Heart right ventricle (tissue), 16 donors: ENCODE measurements at regions of chr2 and their contacts with region 1.

Region 1: GRCh38 chr2:154518872-154519271 is 179.6 kb upstream of the KCNJ3 start:
- DNase-seq: no peak
- ATAC-seq: no peak
- H3K4me3 ChIP-seq: no peak overlapping the region
- H3K27ac ChIP-seq: no peak overlapping the region
- H3K4me1 ChIP-seq: no peaks in the 10 kb centered on the region
- H3K27me3 ChIP-seq: no peaks in the 10 kb centered on the region
- CTCF ChIP-seq: no peak

Region 2: GRCh38 chr2:153043385-153043784 is 1475.5 kb before region 1 on chr2:
- intact Hi-C with region 1: no loop called
- DNase-seq: no peak
- ATAC-seq: no peak
- H3K4me3 ChIP-seq: no peak overlapping the region
- H3K27ac ChIP-seq: no peak overlapping the region
- H3K4me1 ChIP-seq: no peaks in the 10 kb centered on the region
- H3K27me3 ChIP-seq: no peaks in the 10 kb centered on the region
- CTCF ChIP-seq: no peak

Region 3: DNA sequence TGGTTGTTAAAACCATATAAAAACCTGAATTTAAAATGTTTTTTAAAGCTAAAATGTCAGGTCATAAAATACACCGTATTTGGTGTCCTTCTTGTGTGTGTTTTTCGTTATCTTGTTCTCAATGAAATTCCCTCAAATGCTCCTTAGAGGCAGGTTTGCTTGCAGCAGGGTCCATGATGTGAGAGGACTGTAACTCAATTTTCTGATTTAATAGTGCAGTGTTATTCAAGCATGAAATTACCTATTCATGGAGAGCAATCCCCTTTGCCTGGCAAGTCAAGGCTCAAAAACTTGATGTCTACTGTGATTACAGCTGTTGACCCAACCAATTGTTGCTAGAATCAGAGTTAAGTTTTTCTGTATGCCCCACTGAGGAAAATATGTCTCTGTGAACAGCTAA is 328.9 kb before region 1 on chr2:
- intact Hi-C with region 1: loop called in 1 of 10 experiments (anchors 10 kb)
- DNase-seq: no peak
- ATAC-seq: no peak
- H3K4me3 ChIP-seq: no peak overlapping the region
- H3K27ac ChIP-seq: no peak overlapping the region
- H3K4me1 ChIP-seq: no peaks in the 10 kb centered on the region
- H3K27me3 ChIP-seq: no peaks in the 10 kb centered on the region
- CTCF ChIP-seq: no peak

Region 4: DNA sequence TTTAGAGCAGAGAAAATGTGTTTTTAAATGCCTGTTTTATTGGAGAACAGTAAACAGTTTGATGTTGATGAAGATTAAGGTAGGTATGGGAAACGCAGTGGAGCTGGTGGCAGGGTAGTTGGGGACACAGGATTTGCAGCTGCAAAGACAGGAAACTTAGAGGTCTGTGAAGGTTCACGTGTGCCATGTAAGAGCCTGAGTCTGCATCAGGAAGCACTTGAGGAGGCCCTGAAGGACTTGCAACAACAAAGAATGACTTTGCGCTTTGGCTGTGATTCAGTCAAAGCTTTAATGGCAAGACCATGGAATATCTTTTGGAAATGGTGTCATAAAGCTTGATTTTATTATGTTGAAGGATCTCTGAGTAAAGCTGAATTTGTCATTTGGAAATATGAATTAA is 168.0 kb before region 1 on chr2:
- intact Hi-C with region 1: no loop called
- DNase-seq: no peak
- ATAC-seq: no peak
- H3K4me3 ChIP-seq: no peak overlapping the region
- H3K27ac ChIP-seq: no peak overlapping the region
- H3K4me1 ChIP-seq: no peaks in the 10 kb centered on the region
- H3K27me3 ChIP-seq: no peaks in the 10 kb centered on the region
- CTCF ChIP-seq: no peak